Right ventricle myocardium superior (tissue), 1 donor: ENCODE measurements at regions of chr16 and their contacts with region 1.

Region 1: GRCh38 chr16:58582971-58583765 is 46.5 kb downstream of the CNOT1 start:
- DNase-seq: no peak
- ATAC-seq: no peak

Region 2: DNA sequence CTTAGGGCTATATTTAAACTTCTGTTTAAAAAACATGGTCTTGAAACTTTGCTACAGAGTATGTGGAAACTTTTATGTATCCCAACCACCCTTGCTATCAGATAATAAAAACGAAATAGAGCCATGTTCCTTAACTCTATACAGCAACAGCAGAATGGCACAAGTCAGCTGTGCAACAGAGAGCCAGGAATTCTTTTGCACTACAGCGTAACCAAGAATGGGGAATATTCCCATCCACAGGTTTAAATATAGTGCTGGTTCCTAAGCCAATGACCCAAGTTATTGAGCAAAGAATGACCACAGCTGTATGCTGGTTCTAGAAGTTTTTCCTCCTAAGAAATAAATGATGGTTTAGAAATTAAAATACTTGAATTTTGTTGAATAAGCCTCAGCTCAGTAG is 34.8 kb before region 1 on chr16:
- intact Hi-C with region 1: loop called (anchors 5 kb)
- DNase-seq: no peak
- ATAC-seq: peak; percentile 65

Region 3: GRCh38 chr16:58741166-58741565 is 158.0 kb after region 1 on chr16:
- intact Hi-C with region 1: no loop called
- DNase-seq: no peak
- ATAC-seq: no peak